GM23248 (cell line): ENCODE measurements at regions of chr6 and their contacts with region 1.

Region 1: DNA sequence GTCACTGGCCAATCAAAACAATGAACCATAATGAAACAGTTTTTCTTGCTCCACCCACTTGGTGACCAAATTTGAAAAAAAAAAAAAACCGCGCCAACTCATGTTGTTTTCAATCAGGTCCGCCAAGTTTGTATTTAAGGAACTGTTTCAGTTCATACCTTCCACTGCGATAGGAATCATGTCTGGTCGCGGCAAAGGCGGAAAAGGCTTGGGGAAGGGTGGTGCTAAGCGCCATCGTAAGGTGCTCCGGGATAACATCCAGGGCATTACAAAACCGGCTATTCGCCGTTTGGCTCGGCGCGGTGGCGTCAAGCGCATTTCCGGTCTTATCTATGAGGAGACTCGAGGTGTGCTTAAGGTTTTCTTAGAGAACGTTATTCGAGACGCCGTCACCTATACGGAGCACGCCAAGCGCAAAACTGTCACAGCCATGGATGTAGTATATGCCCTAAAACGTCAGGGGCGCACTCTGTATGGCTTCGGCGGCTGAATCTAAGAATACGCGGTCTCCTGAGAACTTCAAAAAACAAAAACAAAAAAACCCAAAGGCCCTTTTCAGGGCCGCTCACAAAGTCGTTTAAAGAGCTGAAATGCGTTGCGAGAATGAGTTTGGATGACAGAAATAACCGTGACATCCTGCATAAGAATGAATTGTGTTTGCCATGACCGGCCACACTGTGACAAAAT is 16.7 kb downstream of the HFE start:
- DNase-seq: peak; percentile 92
- H3K4me3 ChIP-seq: peak overlapping the region; percentile 79
- H3K27ac ChIP-seq: peak overlapping the region; percentile 86
- H3K4me1 ChIP-seq: peaks cover 22% of the 10 kb centered on the region
- H3K27me3 ChIP-seq: no peaks in the 10 kb centered on the region

Region 2: GRCh38 chr6:26064619-26065257 is 39.2 kb before region 1 on chr6:
- in situ Hi-C with region 1: loop called (anchors 5 kb)
- DNase-seq: peak; percentile 70
- H3K4me3 ChIP-seq: no peak overlapping the region
- H3K27ac ChIP-seq: no peak overlapping the region
- H3K4me1 ChIP-seq: peaks cover 4% of the 10 kb centered on the region; the same call in 1 of the 2 replicates
- H3K27me3 ChIP-seq: no peaks in the 10 kb centered on the region